ENCODE measurements at regions of chr3 and their contacts with region 1.

Region 1: GRCh38 chr3:119240591-119241434 is at the start of gene B4GALT4:
- DNase-seq: peak; percentile 74
- ATAC-seq: peak; percentile 91
- H3K4me3 ChIP-seq: peak within 1 kb of the TSS; percentile 67 to 75
- H3K27ac ChIP-seq: peak within 1 kb of the TSS; percentile 73
- H3K4me1 ChIP-seq: peaks cover 6 to 19% of the 10 kb centered on the region in 2 experiments
- H3K27me3 ChIP-seq: no peaks in the 10 kb centered on the region
- CTCF ChIP-seq: no peak
- POLR2A ChIP-seq: peak; percentile 79
- RAD21 ChIP-seq: no peak
- total RNA-seq, gene B4GALT4: 15.9 TPM

Region 2: GRCh38 chr3:118955914-118956556 is 284.8 kb before region 1 on chr3:
- CTCF ChIA-PET with region 1: no interaction called
- POLR2A ChIA-PET with region 1: no interaction called
- RAD21 ChIA-PET with region 1: no interaction called
- intact Hi-C with region 1: no loop called
- DNase-seq: no peak
- ATAC-seq: no peak
- H3K4me3 ChIP-seq: no peak overlapping the region
- H3K27ac ChIP-seq: no peak overlapping the region
- H3K4me1 ChIP-seq: no peaks in the 10 kb centered on the region
- H3K27me3 ChIP-seq: peaks cover 26% of the 10 kb centered on the region
- CTCF ChIP-seq: no peak
- POLR2A ChIP-seq: no peak
- RAD21 ChIP-seq: no peak

Region 3: GRCh38 chr3:119145500-119146191 is 95.2 kb before region 1 on chr3 and contains the start of gene TEX55:
- CTCF ChIA-PET with region 1: interaction called, 7 read pairs
- POLR2A ChIA-PET with region 1: interaction called, 4 read pairs
- RAD21 ChIA-PET with region 1: interaction called in 1 of 2 experiments, 3 read pairs
- intact Hi-C with region 1: loop called (anchors 1 kb)
- DNase-seq: peak; percentile 10
- ATAC-seq: peak; percentile 98
- H3K4me3 ChIP-seq: no peak within 1 kb of the TSS
- H3K27ac ChIP-seq: no peak within 1 kb of the TSS
- H3K4me1 ChIP-seq: no peaks in the 10 kb centered on the region
- H3K27me3 ChIP-seq: no peaks in the 10 kb centered on the region
- CTCF ChIP-seq: peak; percentile 38 to 71 (median 68); a peak in 5 of 6 replicates
- POLR2A ChIP-seq: no peak
- RAD21 ChIP-seq: peak; percentile 53; the same call in 1 of the 2 replicates
- total RNA-seq, gene TEX55: not detected

Region 4: GRCh38 chr3:119457246-119457645 is 216.4 kb after region 1 on chr3:
- CTCF ChIA-PET with region 1: no interaction called
- POLR2A ChIA-PET with region 1: no interaction called
- RAD21 ChIA-PET with region 1: no interaction called
- intact Hi-C with region 1: no loop called
- DNase-seq: no peak
- ATAC-seq: no peak
- H3K4me3 ChIP-seq: no peak overlapping the region
- H3K27ac ChIP-seq: no peak overlapping the region
- H3K4me1 ChIP-seq: peaks cover 4 to 5% of the 10 kb centered on the region in 2 experiments; a peak in 3 of 4 replicates
- H3K27me3 ChIP-seq: no peaks in the 10 kb centered on the region
- CTCF ChIP-seq: no peak
- POLR2A ChIP-seq: no peak
- RAD21 ChIP-seq: no peak